ENCODE measurements at regions of chr3 and their contacts with region 1.

Region 1: DNA sequence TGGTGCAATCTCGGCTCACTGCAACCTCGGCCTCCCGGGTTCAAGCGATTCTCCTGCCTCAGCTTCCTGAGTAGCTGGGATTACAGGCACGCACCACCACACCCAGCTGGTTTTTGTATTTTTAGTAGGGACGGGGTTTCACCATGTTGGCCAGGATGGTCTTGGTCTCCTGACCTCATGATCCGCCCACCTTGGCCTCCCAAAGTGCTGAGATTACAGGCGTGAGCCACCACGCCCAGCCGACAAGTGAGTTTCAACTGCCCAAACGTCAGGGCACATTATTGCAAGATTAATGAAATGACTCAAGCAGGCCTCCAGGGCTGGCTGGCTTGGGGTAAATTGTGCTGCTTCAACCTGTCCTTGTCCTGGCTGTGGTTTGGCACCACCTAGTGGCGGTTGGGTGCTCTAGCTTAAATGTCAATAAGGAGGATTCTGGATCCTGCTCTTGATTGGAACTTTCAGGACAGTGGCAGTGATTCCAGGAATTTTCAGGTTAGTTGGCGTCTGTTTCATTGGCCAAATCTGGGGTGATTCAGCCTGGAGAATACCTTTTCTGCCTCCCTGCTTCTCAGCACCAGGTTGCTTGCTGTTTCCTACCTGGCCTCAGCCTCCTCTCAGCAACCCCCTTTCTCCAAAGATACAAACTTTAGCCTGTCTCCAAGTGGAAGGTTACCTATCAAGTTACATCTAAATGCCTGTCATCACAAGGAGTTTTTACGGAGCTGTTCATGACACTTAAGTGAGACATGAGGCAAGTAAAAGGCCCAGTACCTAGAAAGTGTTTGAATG is 32.4 kb upstream of the SACM1L start:
- DNase-seq: peak; percentile 91

Region 2: DNA sequence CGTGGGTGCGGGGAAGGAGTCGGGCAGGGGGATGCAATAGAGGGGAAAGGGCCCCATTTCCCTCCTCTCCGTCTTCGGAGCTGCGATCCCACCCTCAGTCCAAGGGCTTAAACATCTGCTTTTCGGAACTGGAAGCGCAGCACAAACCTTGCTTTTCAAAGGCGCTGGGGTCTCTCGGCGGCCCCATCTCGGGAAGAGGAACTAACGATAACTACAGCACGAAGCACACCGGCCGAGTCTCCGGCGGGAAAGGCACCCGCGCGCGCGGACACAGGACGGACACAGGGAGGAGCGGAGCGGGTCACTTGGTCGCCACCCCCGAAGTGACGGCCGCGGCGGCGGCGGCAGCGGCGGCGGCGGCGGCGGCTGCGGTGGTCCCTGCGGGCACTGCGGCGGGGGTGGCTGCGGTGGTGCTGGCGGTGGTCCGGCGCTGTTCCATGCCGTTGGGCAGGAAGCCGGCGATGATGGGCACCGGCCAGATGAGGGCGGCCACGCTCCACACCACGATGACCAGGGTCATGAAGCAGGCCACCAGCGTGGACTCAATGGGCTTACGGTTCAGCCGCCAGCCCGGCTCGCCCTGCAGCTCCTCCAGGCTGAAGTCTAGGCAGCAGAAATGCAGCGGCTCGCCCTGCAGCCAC is 431.8 kb before region 1 on chr3:
- in situ Hi-C with region 1: loop called (anchors 25 kb)
- DNase-seq: peak; percentile 77

Region 3: GRCh38 chr3:45760878-45761711 is 104.3 kb after region 1 on chr3:
- in situ Hi-C with region 1: no loop called
- DNase-seq: peak; percentile 51